CD8-positive, alpha-beta memory T cell (primary cell): ENCODE measurements at regions of chr17 and their contacts with region 1.

Region 1: DNA sequence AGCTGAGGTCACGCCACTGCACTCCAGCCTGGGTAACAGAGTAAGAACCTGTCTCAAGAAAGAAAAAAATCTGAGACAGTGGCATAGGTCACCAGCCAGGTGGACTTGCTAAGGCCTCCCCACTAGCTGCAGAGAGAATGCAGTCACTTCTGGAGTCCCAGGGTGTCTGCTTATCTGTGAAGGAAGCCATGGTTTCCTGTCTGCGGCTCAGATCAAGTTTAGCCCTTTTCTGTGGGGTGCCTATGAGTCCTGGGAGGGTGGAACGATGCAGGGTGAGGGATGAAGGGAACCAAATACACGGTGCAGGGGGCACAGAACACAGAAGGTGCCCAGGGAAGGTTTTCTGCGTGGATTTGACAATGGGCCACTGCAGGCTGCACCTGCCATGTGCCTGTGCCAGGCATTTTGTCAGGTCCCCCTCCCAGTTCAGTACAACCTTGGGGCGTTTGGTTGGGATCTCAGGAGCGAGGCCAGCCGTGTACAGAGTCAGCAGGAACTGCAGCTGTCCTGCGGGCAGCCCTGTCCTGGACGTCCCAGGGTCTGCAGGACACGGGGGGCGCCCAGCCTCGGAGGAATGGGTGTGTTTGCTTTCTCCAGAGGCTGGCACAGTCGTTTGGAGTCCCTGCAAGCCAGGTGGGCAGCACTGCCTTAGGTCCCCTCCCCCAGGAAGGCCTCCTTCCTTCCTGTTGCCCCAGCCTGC is 41.8 kb downstream of the RAB11FIP4 start:
- DNase-seq: peak; percentile 31 to 66 (median 37)
- H3K4me3 ChIP-seq: no peak overlapping the region
- H3K4me3 Mint-ChIP-seq: peak overlapping the region in 5 of 7 donors; percentile 4 to 45 (median 43)
- H3K27ac ChIP-seq: no peak overlapping the region
- H3K27ac Mint-ChIP-seq: peak overlapping the region in 6 of 8 donors; percentile 2 to 80 (median 40)
- H3K4me1 ChIP-seq: peaks cover 15% of the 10 kb centered on the region
- H3K4me1 Mint-ChIP-seq: peaks cover 14 to 25% (median 19%) of the 10 kb centered on the region in 3 donors
- H3K27me3 ChIP-seq: no peaks in the 10 kb centered on the region
- H3K27me3 Mint-ChIP-seq: peaks cover 9 to 25% of the 10 kb centered on the region in 2 donors

Region 2: DNA sequence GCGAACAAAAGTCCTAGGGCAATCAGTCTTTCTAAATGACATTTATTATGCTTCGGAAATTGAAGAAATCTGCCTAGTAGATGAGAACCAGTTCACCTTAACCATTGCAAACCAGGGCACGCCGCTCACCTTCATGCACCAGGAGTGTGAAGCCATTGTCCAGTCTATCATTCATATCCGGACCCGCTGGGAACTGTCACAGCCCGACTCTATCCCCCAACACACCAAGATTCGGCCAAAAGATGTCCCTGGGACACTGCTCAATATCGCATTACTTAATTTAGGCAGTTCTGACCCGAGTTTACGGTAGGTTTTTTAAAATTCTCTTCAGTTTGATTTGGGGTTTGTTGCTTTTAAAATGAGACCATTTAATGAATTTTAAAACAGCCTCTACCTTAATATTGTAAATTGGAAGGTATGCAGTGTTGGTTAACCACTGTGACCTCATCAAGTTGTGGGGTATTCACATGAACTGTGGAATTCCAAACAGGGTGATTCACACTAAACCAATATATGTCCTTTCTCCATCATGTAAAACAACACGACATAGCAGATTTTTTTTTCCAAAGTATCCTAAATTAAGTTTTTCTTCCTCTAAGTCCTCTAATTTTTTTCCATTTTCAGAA is 105.6 kb before region 1 on chr17:
- CTCF ChIA-PET with region 1: no interaction called
- POLR2A ChIA-PET with region 1: no interaction called
- DNase-seq: no peak
- H3K4me3 ChIP-seq: no peak overlapping the region
- H3K4me3 Mint-ChIP-seq: no peak overlapping the region
- H3K27ac ChIP-seq: no peak overlapping the region
- H3K27ac Mint-ChIP-seq: peak overlapping the region in 1 of 8 donors; percentile 15
- H3K4me1 ChIP-seq: no peaks in the 10 kb centered on the region
- H3K4me1 Mint-ChIP-seq: peaks cover 9 to 21% (median 19%) of the 10 kb centered on the region in 3 donors
- H3K27me3 ChIP-seq: no peaks in the 10 kb centered on the region
- H3K27me3 Mint-ChIP-seq: peaks cover 0 to 1% of the 10 kb centered on the region in 2 donors

Region 3: DNA sequence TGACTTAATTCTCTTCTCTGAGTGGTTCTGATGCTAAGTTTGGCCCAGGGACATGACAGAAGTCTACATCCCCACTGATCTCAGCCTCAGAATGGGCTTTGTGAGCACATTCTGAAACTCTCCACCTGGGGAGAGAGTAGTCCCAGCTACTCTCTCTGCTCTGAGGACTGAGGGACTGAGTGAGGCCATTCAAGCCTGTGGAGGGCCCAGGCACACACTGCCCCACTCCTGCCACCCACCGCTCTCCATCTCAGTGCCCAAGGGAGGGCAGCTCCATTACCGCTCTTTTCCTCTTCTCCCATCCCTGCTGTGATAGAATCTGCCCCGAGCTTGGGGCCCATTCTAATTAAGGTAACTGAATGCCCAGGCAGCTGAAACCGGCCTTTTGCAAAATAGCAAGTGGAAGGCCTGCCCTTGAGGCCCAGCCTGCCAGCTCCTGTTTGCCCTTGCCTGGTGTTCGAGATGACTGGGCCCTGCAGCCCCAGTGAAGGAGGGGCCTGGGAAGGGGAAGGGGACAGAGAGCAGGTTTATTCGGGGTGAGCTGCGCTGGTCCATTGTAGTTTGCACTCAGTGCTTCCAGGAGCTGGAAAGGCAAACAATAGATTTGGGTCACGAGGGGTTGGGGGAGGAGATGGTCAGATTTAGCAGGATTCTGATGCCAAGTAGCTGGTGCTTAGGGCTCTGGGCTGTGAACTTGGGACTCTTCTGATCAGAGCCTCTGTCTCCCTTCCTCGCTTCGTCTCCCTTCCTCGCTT is 34.4 kb after region 1 on chr17:
- CTCF ChIA-PET with region 1: no interaction called
- POLR2A ChIA-PET with region 1: no interaction called
- DNase-seq: no peak
- H3K4me3 ChIP-seq: no peak overlapping the region
- H3K4me3 Mint-ChIP-seq: no peak overlapping the region
- H3K27ac ChIP-seq: no peak overlapping the region
- H3K27ac Mint-ChIP-seq: no peak overlapping the region
- H3K4me1 ChIP-seq: peaks cover 12% of the 10 kb centered on the region
- H3K4me1 Mint-ChIP-seq: peaks cover 0 to 21% (median 7%) of the 10 kb centered on the region in 3 donors
- H3K27me3 ChIP-seq: no peaks in the 10 kb centered on the region
- H3K27me3 Mint-ChIP-seq: peaks cover 1 to 4% of the 10 kb centered on the region in 2 donors

Region 4: DNA sequence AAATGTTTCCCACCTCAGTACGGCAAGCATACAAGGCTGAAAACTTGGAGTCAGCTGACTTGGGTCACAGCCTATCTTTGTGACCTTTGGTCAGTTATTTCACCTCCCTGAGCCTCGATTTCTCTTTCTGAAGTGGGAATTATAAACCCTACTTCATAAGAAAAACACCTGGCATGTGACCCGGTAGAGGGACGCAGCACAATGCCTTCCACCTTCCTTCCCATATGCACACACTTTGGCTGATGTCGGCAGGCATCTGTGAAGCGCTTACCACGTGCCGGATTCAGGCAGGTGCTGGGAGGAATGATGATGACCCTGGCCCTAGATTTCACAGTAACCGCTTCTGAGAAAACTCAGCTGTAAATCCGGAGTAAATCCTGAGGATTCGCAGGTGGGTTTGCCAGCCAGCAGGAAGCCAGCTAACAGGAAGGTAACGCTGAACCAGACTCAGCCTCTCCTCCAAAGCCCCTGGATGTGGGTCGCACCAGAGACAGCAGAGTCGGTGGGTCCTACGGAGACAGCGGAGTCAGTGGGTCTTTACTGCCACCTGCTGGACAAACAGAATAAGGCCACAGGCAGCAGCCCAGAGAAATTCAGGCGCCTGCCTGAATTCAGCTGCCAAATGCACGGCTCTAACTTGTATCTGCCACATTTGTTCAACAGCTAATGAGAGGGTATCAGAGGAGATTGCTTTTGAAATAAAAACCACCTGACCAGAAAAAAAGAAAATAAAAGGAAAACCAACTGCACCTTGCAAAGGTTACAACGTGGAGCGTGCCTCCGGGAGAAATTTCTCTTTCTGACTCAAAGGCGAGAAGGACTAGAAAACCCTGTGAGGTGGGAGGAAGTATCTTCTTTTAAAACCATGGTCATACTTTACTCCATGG is 409.2 kb after region 1 on chr17:
- CTCF ChIA-PET with region 1: interaction called, 13 read pairs
- POLR2A ChIA-PET with region 1: no interaction called
- DNase-seq: peak; percentile 37 to 73 (median 49)
- H3K4me3 ChIP-seq: peak overlapping the region; percentile 11
- H3K4me3 Mint-ChIP-seq: no peak overlapping the region
- H3K27ac ChIP-seq: no peak overlapping the region
- H3K27ac Mint-ChIP-seq: no peak overlapping the region
- H3K4me1 ChIP-seq: peaks cover 7% of the 10 kb centered on the region
- H3K4me1 Mint-ChIP-seq: no peaks in the 10 kb centered on the region
- H3K27me3 ChIP-seq: peaks cover 8% of the 10 kb centered on the region
- H3K27me3 Mint-ChIP-seq: peaks cover 3 to 15% of the 10 kb centered on the region in 2 donors